Activated T-helper 2 cell treated with anti-CD3 and anti-CD28 coated beads, Interferon-gamma antibody, Interleukin-2, Interleukin-4, amounts not matched to agents 10 μg/mL and 5 μg/mL and 100 μg/mL, durations not matched to agents 14 hours and 24 hours and 36 hours (primary cell): ENCODE measurements at regions of chr6 and their contacts with region 1.

Region 1: DNA sequence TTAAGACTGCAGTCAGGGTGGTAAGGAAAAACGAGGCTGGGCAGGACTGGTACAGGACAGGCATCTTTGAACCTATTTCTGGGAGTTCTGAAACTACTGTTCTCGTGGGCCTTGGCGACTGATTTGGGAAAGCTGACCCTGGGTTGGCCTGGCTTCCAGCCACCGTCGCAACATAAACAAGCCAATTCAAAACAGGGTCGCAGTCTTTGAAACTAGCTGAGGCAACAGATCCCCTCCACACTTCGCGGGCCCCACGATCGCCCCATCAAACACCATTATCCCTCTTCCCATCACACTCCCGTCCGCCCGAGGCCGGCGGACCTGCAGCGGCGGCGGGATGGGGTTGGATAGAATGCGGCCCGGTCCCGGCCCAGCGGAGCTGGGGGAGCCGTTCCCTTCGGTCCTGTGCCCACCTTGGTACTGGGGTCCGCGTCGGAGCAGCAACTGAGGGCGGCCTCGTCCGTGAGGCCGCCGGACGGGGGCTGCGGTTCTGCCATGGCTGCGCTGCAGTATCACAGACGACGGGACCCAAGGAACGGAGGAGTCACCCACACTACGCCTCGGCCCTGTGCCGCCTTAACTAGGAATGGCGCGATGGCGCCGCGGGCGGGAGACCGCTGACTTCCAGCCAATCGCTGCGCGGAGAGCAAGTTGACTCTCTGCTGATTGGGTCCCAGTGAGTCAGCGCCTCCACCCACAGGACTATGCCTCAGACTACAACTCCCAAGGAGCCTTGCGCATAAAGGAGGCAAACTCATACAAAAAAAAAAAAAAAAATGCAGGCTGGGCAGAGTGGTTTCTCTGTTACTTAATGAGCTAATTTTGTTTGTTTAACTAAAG is at the start of gene GLO1:
- DNase-seq: peak; percentile 95
- H3K4me3 Mint-ChIP-seq: peak within 1 kb of the TSS; percentile 97
- H3K27ac Mint-ChIP-seq: peak within 1 kb of the TSS; percentile 97
- H3K4me1 Mint-ChIP-seq: peaks cover 43% of the 10 kb centered on the region
- H3K27me3 Mint-ChIP-seq: peaks cover 3% of the 10 kb centered on the region
- total RNA-seq, gene GLO1: 129 and 134 TPM in 2 replicates

Region 2: GRCh38 chr6:38552121-38552520 is 150.7 kb before region 1 on chr6:
- intact Hi-C with region 1: no loop called
- DNase-seq: no peak
- H3K4me3 Mint-ChIP-seq: no peak overlapping the region
- H3K27ac Mint-ChIP-seq: no peak overlapping the region
- H3K4me1 Mint-ChIP-seq: no peaks in the 10 kb centered on the region
- H3K27me3 Mint-ChIP-seq: no peaks in the 10 kb centered on the region

Region 3: GRCh38 chr6:38713812-38714211 is 11.0 kb after region 1 on chr6:
- intact Hi-C with region 1: loop called (anchors 1 kb)
- DNase-seq: peak; percentile 76
- H3K4me3 Mint-ChIP-seq: peak overlapping the region; percentile 56
- H3K27ac Mint-ChIP-seq: peak overlapping the region; percentile 87
- H3K4me1 Mint-ChIP-seq: peaks cover 44% of the 10 kb centered on the region
- H3K27me3 Mint-ChIP-seq: peaks cover 13% of the 10 kb centered on the region

Region 4: DNA sequence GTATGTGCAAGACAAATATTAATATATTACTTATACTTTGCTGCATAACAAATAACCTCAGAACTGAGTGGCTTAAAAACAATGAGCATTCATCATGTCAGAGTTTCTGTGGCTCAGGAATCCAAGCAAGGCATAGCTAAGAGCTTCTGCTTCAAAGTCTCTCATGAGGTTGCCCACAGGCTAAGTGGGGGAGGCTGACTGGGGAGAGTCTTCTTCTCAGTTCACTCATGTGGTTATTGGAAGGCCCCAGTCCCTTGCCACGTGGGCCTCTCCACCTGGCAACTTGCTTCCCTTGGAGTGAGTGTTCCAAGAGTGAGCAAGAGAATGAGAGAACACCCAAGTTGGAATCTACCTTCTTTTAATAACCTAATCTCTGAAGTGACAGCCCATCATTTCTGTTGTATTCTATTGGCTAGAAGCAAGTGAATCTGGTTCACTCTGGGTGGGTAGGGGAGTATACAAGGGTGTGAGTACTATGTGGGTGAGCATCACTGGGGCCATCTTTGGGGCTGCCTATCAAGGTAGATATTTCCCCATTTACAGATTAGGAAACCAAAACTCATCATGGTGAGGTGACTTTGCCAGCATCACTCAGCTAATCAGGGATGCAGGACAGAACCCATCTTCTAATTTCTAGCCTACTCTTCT is 48.3 kb after region 1 on chr6:
- intact Hi-C with region 1: no loop called
- DNase-seq: no peak
- H3K4me3 Mint-ChIP-seq: no peak overlapping the region
- H3K27ac Mint-ChIP-seq: no peak overlapping the region
- H3K4me1 Mint-ChIP-seq: peaks cover 2% of the 10 kb centered on the region
- H3K27me3 Mint-ChIP-seq: peaks cover 10% of the 10 kb centered on the region